CD4-positive, alpha-beta T cell (primary cell): ENCODE measurements at regions of chr1 and their contacts with region 1.

Region 1: DNA sequence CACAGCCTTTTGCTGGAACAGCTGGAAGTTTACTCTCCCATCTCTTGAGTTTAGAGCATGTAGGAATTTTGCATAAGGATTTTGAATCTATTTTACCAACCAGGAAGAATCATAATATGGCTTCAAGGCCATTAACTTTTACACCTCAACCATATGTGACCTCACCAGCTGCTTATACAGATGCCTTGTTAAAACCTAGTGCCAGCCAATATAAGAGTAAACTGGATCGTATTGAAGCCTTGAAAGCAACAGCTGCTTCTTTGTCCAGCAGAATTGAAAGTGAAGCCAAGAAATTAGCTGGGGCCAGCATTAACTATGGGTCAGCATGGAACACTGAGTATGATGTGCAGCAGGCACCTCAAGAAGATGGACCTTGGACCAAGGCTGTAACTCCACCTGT is 65.4 kb downstream of the CEP350 start:
- DNase-seq: no peak
- ATAC-seq: no peak
- H3K4me3 ChIP-seq: no peak overlapping the region
- H3K4me3 Mint-ChIP-seq: no peak overlapping the region
- H3K27ac ChIP-seq: no peak overlapping the region
- H3K27ac Mint-ChIP-seq: no peak overlapping the region
- H3K4me1 ChIP-seq: no peaks in the 10 kb centered on the region
- H3K4me1 Mint-ChIP-seq: peaks cover 5% of the 10 kb centered on the region
- H3K27me3 ChIP-seq: no peaks in the 10 kb centered on the region
- H3K27me3 Mint-ChIP-seq: no peaks in the 10 kb centered on the region
- CTCF ChIP-seq: no peak

Region 2: DNA sequence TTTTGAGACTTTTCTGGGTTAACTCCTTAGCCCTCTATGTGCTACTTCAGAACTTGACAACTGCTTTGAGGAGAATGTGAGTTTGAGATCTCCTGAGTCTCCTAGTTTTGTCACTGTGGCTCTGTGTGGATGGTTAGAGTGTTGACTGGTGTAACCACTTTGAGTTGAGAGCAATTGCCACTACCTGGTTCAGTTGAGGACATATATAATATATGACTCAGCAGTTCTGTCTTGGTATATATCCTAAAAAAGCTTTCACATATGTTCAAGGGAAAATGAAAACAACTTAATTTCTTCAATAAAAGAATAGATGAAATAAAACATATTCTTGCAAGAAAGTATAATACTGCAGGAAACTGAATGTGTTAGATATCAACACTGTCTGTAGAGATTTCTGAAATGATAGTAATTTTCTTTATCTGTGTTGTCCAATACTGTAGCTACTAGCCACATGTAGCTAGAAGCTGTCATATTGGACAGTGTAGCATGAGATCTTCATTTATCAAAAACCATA is 37.9 kb after region 1 on chr1:
- CTCF ChIA-PET with region 1: no interaction called
- POLR2A ChIA-PET with region 1: no interaction called
- intact Hi-C with region 1: loop called in 1 of 2 experiments (anchors 5 kb)
- DNase-seq: no peak
- ATAC-seq: no peak
- H3K4me3 ChIP-seq: no peak overlapping the region
- H3K4me3 Mint-ChIP-seq: no peak overlapping the region
- H3K27ac ChIP-seq: no peak overlapping the region
- H3K27ac Mint-ChIP-seq: no peak overlapping the region
- H3K4me1 ChIP-seq: no peaks in the 10 kb centered on the region
- H3K4me1 Mint-ChIP-seq: no peaks in the 10 kb centered on the region
- H3K27me3 ChIP-seq: no peaks in the 10 kb centered on the region
- H3K27me3 Mint-ChIP-seq: no peaks in the 10 kb centered on the region
- CTCF ChIP-seq: no peak

Region 3: GRCh38 chr1:180092931-180093559 is 73.0 kb after region 1 on chr1:
- CTCF ChIA-PET with region 1: no interaction called
- POLR2A ChIA-PET with region 1: no interaction called
- intact Hi-C with region 1: loop called in 1 of 2 experiments (anchors 5 kb)
- DNase-seq: no peak
- ATAC-seq: no peak
- H3K4me3 ChIP-seq: no peak overlapping the region
- H3K4me3 Mint-ChIP-seq: no peak overlapping the region
- H3K27ac ChIP-seq: no peak overlapping the region
- H3K27ac Mint-ChIP-seq: peak overlapping the region; percentile 61
- H3K4me1 ChIP-seq: no peaks in the 10 kb centered on the region
- H3K4me1 Mint-ChIP-seq: no peaks in the 10 kb centered on the region
- H3K27me3 ChIP-seq: no peaks in the 10 kb centered on the region
- H3K27me3 Mint-ChIP-seq: no peaks in the 10 kb centered on the region
- CTCF ChIP-seq: no peak